ENCODE measurements at regions of chr9 and their contacts with region 1.

Region 1: GRCh38 chr9:36036780-36037548 is at the start of gene RECK:
- DNase-seq: no peak
- H3K4me3 ChIP-seq: peak within 1 kb of the TSS; percentile 79
- H3K27me3 ChIP-seq: no peaks in the 10 kb centered on the region
- CTCF ChIP-seq: no peak
- polyA plus RNA-seq, gene RECK: 59.8 and 72.8 TPM in 2 replicates

Region 2: GRCh38 chr9:36051317-36051716 is 14.4 kb after region 1 on chr9:
- CTCF ChIA-PET with region 1: no interaction called
- POLR2A ChIA-PET with region 1: no interaction called
- DNase-seq: no peak
- H3K4me3 ChIP-seq: no peak overlapping the region
- H3K27me3 ChIP-seq: no peaks in the 10 kb centered on the region
- CTCF ChIP-seq: no peak

Region 3: GRCh38 chr9:36142510-36143244 is 105.7 kb after region 1 on chr9:
- CTCF ChIA-PET with region 1: no interaction called
- POLR2A ChIA-PET with region 1: interaction called, 32 read pairs
- DNase-seq: no peak
- H3K4me3 ChIP-seq: no peak overlapping the region
- H3K27me3 ChIP-seq: no peaks in the 10 kb centered on the region
- CTCF ChIP-seq: no peak

Region 4: GRCh38 chr9:36396985-36397384 is 360.0 kb after region 1 on chr9:
- CTCF ChIA-PET with region 1: no interaction called
- POLR2A ChIA-PET with region 1: interaction called, 10 read pairs
- DNase-seq: no peak
- H3K4me3 ChIP-seq: no peak overlapping the region
- H3K27me3 ChIP-seq: no peaks in the 10 kb centered on the region
- CTCF ChIP-seq: no peak

Measured in BJ (cell line).